ENCODE measurements at regions of chr20 and their contacts with region 1.

Region 1: GRCh38 chr20:50790651-50791277 is 4.1 kb upstream of the BCAS4 start:
- DNase-seq: peak; percentile 86 to 97
- H3K4me3 ChIP-seq: peak overlapping the region; percentile 30; the same call in 1 of the 2 replicates
- H3K27ac ChIP-seq: peak overlapping the region; percentile 61
- H3K4me1 ChIP-seq: peaks cover 18% of the 10 kb centered on the region
- H3K27me3 ChIP-seq: no peaks in the 10 kb centered on the region
- CTCF ChIP-seq: peak; percentile 73

Region 2: GRCh38 chr20:50460460-50461267 is 330.1 kb before region 1 on chr20:
- CTCF ChIA-PET with region 1: no interaction called
- POLR2A ChIA-PET with region 1: no interaction called
- intact Hi-C with region 1: loop called (anchors 2 kb)
- DNase-seq: peak; percentile 70 to 90
- H3K4me3 ChIP-seq: no peak overlapping the region
- H3K27ac ChIP-seq: no peak overlapping the region
- H3K4me1 ChIP-seq: peaks cover 43% of the 10 kb centered on the region
- H3K27me3 ChIP-seq: no peaks in the 10 kb centered on the region
- CTCF ChIP-seq: peak; percentile 99

Region 3: GRCh38 chr20:50663095-50663850 is 127.5 kb before region 1 on chr20:
- CTCF ChIA-PET with region 1: interaction called, 10 read pairs
- POLR2A ChIA-PET with region 1: interaction called, 14 read pairs
- intact Hi-C with region 1: loop called (anchors 1 kb)
- DNase-seq: peak; percentile 81 to 96
- H3K4me3 ChIP-seq: no peak overlapping the region
- H3K27ac ChIP-seq: peak overlapping the region; percentile 85
- H3K4me1 ChIP-seq: peaks cover 67% of the 10 kb centered on the region
- H3K27me3 ChIP-seq: no peaks in the 10 kb centered on the region
- CTCF ChIP-seq: peak; percentile 71

Region 4: GRCh38 chr20:50750145-50750671 is 40.6 kb before region 1 on chr20:
- CTCF ChIA-PET with region 1: interaction called, 10 read pairs
- POLR2A ChIA-PET with region 1: interaction called, 8 read pairs
- intact Hi-C with region 1: no loop called
- DNase-seq: no peak
- H3K4me3 ChIP-seq: no peak overlapping the region
- H3K27ac ChIP-seq: no peak overlapping the region
- H3K4me1 ChIP-seq: peaks cover 36% of the 10 kb centered on the region
- H3K27me3 ChIP-seq: no peaks in the 10 kb centered on the region
- CTCF ChIP-seq: no peak

Region 5: GRCh38 chr20:50929299-50930138 is 138.8 kb after region 1 on chr20:
- CTCF ChIA-PET with region 1: interaction called, 18 read pairs
- POLR2A ChIA-PET with region 1: interaction called, 3 read pairs
- intact Hi-C with region 1: loop called (anchors 1 kb)
- DNase-seq: peak; percentile 82 to 87
- H3K4me3 ChIP-seq: peak overlapping the region; percentile 69
- H3K27ac ChIP-seq: no peak overlapping the region
- H3K4me1 ChIP-seq: peaks cover 39% of the 10 kb centered on the region
- H3K27me3 ChIP-seq: no peaks in the 10 kb centered on the region
- CTCF ChIP-seq: peak; percentile 95

Region 6: DNA sequence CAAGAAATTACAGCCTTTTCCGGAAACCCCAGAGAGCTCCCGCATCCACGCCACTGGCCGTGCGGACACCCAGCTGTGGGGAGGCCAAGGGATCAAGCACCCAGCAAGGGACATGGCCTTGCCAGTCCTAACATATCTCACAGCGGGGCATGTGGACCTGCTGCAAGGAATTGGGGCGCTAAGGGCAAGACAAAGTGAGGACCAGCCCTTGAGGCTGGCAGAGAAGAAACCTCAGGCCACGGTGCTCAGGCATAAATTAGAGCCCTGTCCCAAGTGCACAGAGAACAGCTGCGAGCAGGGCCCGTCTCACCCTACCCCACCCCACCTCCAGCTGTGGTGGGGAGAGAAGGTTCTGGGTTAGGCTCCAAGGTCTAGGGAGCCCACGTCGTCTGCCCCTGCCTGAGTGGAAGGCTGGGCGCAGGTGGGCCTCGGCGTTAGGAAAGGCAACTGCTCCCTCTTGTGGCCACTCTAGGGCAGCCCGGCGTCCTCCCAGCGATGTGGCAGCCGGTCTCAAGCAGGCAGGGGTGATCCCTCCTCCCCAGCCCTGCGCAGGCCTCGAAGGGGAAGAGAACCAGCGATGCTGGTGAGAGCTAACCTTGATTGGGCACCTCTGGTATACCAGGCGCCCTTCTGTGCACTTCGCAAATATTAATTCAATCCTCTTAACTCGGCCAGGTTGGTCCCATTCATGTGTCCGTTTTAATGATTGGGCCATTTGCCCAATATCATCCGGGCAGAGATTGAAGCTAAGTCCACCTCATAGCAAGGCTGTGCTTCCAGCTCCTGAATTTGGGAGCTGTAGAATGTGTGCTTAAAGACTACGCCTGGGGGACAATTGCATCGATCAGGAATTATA is 516.0 kb after region 1 on chr20:
- CTCF ChIA-PET with region 1: no interaction called
- POLR2A ChIA-PET with region 1: no interaction called
- intact Hi-C with region 1: loop called (anchors 1 kb)
- DNase-seq: peak in 1 of 2 experiments; percentile 76
- H3K4me3 ChIP-seq: no peak overlapping the region
- H3K27ac ChIP-seq: no peak overlapping the region
- H3K4me1 ChIP-seq: peaks cover 16% of the 10 kb centered on the region
- H3K27me3 ChIP-seq: peaks cover 6% of the 10 kb centered on the region; the same call in 1 of the 2 replicates
- CTCF ChIP-seq: peak; percentile 97